ENCODE measurements at regions of chrX and their contacts with region 1.

Region 1: DNA sequence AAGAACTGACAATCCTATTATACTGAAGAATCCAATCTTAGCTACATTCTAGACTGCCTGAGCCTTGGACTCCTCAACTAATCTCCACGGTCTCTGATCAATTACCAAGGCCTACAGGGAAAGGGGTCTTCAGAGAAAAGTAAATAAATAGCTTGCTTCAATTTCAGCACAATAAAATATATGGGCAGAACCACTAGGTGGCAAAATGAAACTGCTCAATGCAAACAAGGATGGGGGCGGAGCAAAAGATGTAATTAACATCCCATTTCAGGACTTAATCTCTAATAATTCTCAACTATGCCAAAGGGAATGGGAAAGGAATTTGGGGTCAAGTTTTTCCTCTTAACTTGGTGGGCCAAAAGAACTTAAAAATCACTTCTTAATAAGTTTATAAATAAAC is 78.4 kb upstream of the MAP3K15 start:
- DNase-seq: peak; percentile 48
- ATAC-seq: peak; percentile 32; the same call in 1 of the 2 replicates
- H3K4me3 ChIP-seq: no peak overlapping the region
- H3K27ac ChIP-seq: no peak overlapping the region
- H3K4me1 ChIP-seq: peaks cover 3% of the 10 kb centered on the region
- H3K27me3 ChIP-seq: no peaks in the 10 kb centered on the region
- CTCF ChIP-seq: peak; percentile 63
- POLR2A ChIP-seq: no peak
- RAD21 ChIP-seq: peak; percentile 73

Region 2: GRCh38 chrX:19739683-19740082 is 146.0 kb after region 1 on chrX:
- CTCF ChIA-PET with region 1: interaction called, 4 read pairs
- POLR2A ChIA-PET with region 1: no interaction called
- dilution Hi-C with region 1: no loop called
- in situ Hi-C with region 1: no loop called
- intact Hi-C with region 1: loop called (anchors 2 kb)
- DNase-seq: peak; percentile 73
- ATAC-seq: peak; percentile 83
- H3K4me3 ChIP-seq: no peak overlapping the region
- H3K27ac ChIP-seq: no peak overlapping the region
- H3K4me1 ChIP-seq: no peaks in the 10 kb centered on the region
- H3K27me3 ChIP-seq: no peaks in the 10 kb centered on the region
- CTCF ChIP-seq: peak; percentile 72
- POLR2A ChIP-seq: no peak
- RAD21 ChIP-seq: peak; percentile 76

Region 3: DNA sequence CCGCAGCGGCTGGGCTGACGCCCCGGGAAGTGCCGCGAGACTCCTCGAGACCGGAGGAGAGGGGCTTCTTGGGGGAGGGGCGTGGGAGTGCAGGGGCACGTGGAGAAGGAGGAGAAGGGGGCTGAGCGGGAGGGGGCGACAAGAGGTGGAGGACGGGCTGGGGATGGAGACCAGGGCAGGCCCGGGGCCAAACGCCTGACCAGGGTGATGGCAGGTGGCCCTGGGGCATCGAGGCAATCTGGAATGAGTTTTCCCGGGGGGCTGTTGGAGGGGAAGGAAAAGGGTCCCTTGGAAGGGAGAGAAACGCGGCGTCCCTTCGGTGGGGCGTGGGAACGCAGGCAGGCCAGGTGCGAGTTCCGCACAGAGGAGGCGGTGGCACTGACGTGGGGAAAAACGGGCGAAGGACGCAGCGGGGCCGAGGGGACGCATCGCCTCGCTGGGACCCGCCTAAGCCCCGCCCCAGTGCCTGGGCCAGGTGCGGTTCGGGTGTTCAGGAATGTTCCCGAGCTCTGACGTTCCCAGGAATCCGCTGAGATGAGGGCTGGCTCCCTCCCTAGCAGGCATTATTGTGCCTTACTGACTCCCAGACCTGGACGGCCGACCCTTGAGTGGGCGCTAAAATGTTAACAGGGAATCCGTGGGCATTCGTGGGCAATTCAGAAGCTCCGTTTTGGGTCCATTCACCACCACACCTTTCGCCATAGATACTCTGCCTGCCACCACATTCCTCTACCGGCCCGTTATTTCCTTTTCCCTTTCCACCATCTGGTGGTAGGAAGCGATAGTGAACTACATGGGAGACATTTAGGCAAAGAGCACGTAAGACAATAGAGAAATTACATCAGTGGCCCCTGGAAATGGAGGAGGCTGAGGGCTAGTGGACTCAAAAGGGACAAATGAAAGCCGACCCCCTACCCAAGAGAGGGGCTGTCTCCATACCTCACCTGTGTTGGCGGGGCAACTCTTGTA is 294.5 kb after region 1 on chrX:
- CTCF ChIA-PET with region 1: no interaction called
- POLR2A ChIA-PET with region 1: no interaction called
- dilution Hi-C with region 1: no loop called
- in situ Hi-C with region 1: loop called (anchors 10 kb)
- intact Hi-C with region 1: loop called (anchors 1 kb)
- DNase-seq: peak; percentile 77
- ATAC-seq: peak; percentile 60
- H3K4me3 ChIP-seq: peak overlapping the region; percentile 56
- H3K27ac ChIP-seq: peak overlapping the region; percentile 46
- H3K4me1 ChIP-seq: 0 out of 2 replicates have a peak, but pooled peaks cover 2% of the 10 kb centered on the region
- H3K27me3 ChIP-seq: no peaks in the 10 kb centered on the region
- CTCF ChIP-seq: peak; percentile 70
- POLR2A ChIP-seq: no peak
- RAD21 ChIP-seq: peak; percentile 76

Region 4: GRCh38 chrX:20116579-20117240 is 523.0 kb after region 1 on chrX and contains the start of gene MAP7D2:
- CTCF ChIA-PET with region 1: no interaction called
- POLR2A ChIA-PET with region 1: no interaction called
- dilution Hi-C with region 1: no loop called
- in situ Hi-C with region 1: loop called (anchors 25 kb)
- intact Hi-C with region 1: no loop called
- DNase-seq: no peak
- ATAC-seq: peak; percentile 42
- H3K4me3 ChIP-seq: no peak within 1 kb of the TSS; the same call in 1 of the 2 replicates
- H3K27ac ChIP-seq: no peak within 1 kb of the TSS
- H3K4me1 ChIP-seq: no peaks in the 10 kb centered on the region
- H3K27me3 ChIP-seq: peaks cover 32% of the 10 kb centered on the region
- CTCF ChIP-seq: no peak
- POLR2A ChIP-seq: no peak
- RAD21 ChIP-seq: no peak
- total RNA-seq, gene MAP7D2: under 0.01 and 0.18 TPM in 2 replicates